Caco-2 (cell line): ENCODE measurements at regions of chr5 and their contacts with region 1.

Region 1: GRCh38 chr5:67963789-67964519 is 251.6 kb upstream of the PIK3R1 start:
- DNase-seq: peak in 1 of 2 experiments; percentile 20
- H3K4me3 ChIP-seq: no peak overlapping the region
- H3K4me3 Mint-ChIP-seq: no peak overlapping the region
- H3K27ac Mint-ChIP-seq: peak overlapping the region; percentile 48
- H3K4me1 ChIP-seq: peaks cover 23% of the 10 kb centered on the region
- H3K4me1 Mint-ChIP-seq: peaks cover 26% of the 10 kb centered on the region
- H3K27me3 ChIP-seq: no peaks in the 10 kb centered on the region
- H3K27me3 Mint-ChIP-seq: no peaks in the 10 kb centered on the region
- CTCF ChIP-seq: no peak

Region 2: DNA sequence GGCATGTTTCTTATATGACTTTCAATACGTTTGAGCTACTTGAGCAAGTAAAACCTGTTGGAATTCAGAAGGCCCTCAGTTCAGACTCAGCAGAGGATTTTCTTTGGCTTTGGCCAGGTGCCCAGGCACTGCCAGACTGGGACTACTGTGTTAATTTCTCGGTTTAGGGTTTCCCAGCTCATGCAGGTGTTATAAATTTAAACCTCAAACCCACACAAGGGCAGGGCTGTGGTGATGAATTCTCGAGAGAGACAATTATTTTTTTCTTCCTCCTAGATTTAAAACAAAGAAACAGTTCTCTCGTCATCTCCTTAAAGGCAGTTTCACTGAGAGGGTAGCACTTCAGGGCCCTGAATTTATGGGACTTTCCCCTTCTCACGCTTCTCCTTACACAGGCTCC is 154.4 kb before region 1 on chr5:
- CTCF ChIA-PET with region 1: no interaction called
- POLR2A ChIA-PET with region 1: no interaction called
- intact Hi-C with region 1: no loop called
- DNase-seq: no peak
- H3K4me3 ChIP-seq: no peak overlapping the region
- H3K4me3 Mint-ChIP-seq: no peak overlapping the region
- H3K27ac Mint-ChIP-seq: no peak overlapping the region
- H3K4me1 ChIP-seq: peaks cover 7% of the 10 kb centered on the region; the same call in 1 of the 2 replicates
- H3K4me1 Mint-ChIP-seq: peaks cover 10% of the 10 kb centered on the region
- H3K27me3 ChIP-seq: no peaks in the 10 kb centered on the region
- H3K27me3 Mint-ChIP-seq: no peaks in the 10 kb centered on the region
- CTCF ChIP-seq: no peak

Region 3: GRCh38 chr5:68033961-68034571 is 70.1 kb after region 1 on chr5:
- CTCF ChIA-PET with region 1: no interaction called
- POLR2A ChIA-PET with region 1: no interaction called
- intact Hi-C with region 1: loop called (anchors 5 kb)
- DNase-seq: peak; percentile 61 to 85
- H3K4me3 ChIP-seq: no peak overlapping the region
- H3K4me3 Mint-ChIP-seq: no peak overlapping the region
- H3K27ac Mint-ChIP-seq: peak overlapping the region; percentile 93
- H3K4me1 ChIP-seq: peaks cover 41% of the 10 kb centered on the region
- H3K4me1 Mint-ChIP-seq: peaks cover 34% of the 10 kb centered on the region
- H3K27me3 ChIP-seq: no peaks in the 10 kb centered on the region
- H3K27me3 Mint-ChIP-seq: no peaks in the 10 kb centered on the region
- CTCF ChIP-seq: no peak

Region 4: GRCh38 chr5:68170826-68171558 is 207.0 kb after region 1 on chr5:
- CTCF ChIA-PET with region 1: no interaction called
- POLR2A ChIA-PET with region 1: no interaction called
- intact Hi-C with region 1: no loop called
- DNase-seq: no peak
- H3K4me3 ChIP-seq: no peak overlapping the region
- H3K4me3 Mint-ChIP-seq: no peak overlapping the region
- H3K27ac Mint-ChIP-seq: no peak overlapping the region
- H3K4me1 ChIP-seq: no peaks in the 10 kb centered on the region
- H3K4me1 Mint-ChIP-seq: peaks cover 10% of the 10 kb centered on the region
- H3K27me3 ChIP-seq: no peaks in the 10 kb centered on the region
- H3K27me3 Mint-ChIP-seq: no peaks in the 10 kb centered on the region
- CTCF ChIP-seq: no peak